ENCODE measurements at regions of chr6 and their contacts with region 1.

Region 1: GRCh38 chr6:7389451-7390225 is at the starts of genes CAGE1 and RIOK1:
- DNase-seq: peak; percentile 95
- total RNA-seq, gene CAGE1: 0.47 TPM in 1 of 2 replicates, not detected in the other
- total RNA-seq, gene RIOK1: 10.5 and 16.3 TPM in 2 replicates

Region 2: GRCh38 chr6:7332090-7332745 is 57.4 kb before region 1 on chr6:
- in situ Hi-C with region 1: loop called (anchors 5 kb)
- DNase-seq: no peak

Region 3: GRCh38 chr6:7439228-7439627 is 49.6 kb after region 1 on chr6:
- in situ Hi-C with region 1: no loop called
- DNase-seq: no peak

Measured in G401 (cell line).